Mammary epithelial cell (primary cell): ENCODE measurements at regions of chr7 and their contacts with region 1.

Region 1: DNA sequence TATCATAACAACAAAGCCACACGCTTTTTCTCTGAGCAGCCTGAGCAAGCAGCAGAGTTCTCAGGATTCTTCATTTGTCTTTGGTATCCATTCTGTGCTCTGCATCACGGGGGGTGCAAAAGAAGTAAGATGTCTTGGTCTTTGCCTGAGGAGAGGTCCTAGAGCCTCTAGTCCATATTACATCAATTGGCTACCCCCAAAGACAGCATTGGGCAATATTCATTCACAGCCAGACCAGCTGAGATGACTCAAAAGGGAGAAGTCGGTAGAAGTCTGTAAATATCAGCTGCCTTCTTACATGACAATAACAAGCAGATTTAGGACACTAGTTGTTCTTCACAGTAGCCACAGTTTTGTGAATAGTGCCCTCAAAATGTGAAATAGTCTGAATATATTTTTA is 66.6 kb downstream of the FZD1 start:
- DNase-seq: no peak
- H3K4me3 ChIP-seq: no peak overlapping the region
- H3K27ac ChIP-seq: no peak overlapping the region
- H3K4me1 ChIP-seq: no peaks in the 10 kb centered on the region
- H3K27me3 ChIP-seq: peaks cover 9% of the 10 kb centered on the region
- CTCF ChIP-seq: no peak

Region 2: DNA sequence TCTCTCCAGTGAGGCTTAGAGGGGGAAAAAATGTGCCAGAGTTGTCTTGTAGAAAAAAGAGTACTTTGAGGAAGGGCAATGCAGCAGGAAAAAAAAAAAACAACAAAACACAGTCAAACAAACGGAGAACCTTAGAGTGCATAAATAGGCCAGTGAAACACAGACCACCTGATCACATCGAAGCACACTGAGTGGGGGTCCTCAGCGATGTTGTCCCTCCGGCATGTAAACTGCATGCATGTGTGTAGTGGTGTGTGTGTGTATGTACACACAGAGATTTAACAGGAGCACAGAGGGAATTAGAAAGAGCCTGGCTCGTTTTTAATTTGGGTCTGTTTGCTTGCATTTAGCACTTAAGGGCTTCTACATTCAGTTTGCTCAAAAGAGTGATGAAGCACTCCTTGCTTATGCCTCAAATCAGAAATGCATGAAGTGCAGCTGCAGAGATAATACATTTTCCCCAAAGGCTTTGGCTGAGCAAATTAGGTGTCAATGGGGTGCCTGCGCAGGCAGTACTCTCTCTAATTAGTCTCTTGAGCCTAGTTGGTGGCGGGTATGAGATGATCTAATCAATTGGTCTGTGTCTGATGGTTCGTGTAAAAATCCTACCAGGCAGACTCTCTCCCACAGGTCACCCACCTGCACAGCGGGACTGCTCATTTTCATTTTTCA is 129.3 kb before region 1 on chr7:
- CTCF ChIA-PET with region 1: no interaction called
- dilution Hi-C with region 1: no loop called
- in situ Hi-C with region 1: no loop called
- intact Hi-C with region 1: no loop called
- DNase-seq: no peak
- H3K4me3 ChIP-seq: no peak overlapping the region
- H3K27ac ChIP-seq: no peak overlapping the region
- H3K4me1 ChIP-seq: no peaks in the 10 kb centered on the region
- H3K27me3 ChIP-seq: no peaks in the 10 kb centered on the region
- CTCF ChIP-seq: no peak

Region 3: DNA sequence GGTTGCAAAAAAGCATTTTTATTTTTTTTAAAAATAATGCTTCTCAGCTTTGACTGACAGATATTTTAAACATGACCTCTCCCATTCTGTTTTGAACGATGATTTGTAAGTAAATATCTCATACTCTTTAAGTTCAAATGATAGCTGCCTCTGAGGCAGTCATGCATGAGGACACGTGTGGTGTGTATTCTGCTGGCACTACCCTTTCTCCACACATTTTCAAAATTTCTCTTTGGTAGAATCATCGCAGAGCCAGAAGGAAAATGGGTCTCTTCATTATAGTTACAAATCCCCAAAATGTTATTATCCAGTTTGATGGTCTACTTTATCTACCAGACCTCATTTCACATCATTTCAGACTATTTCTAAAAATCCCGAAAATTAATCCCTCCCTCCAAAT is 11.5 kb before region 1 on chr7:
- CTCF ChIA-PET with region 1: interaction called, 15 read pairs
- dilution Hi-C with region 1: no loop called
- in situ Hi-C with region 1: no loop called
- intact Hi-C with region 1: no loop called
- DNase-seq: no peak
- H3K4me3 ChIP-seq: no peak overlapping the region
- H3K27ac ChIP-seq: no peak overlapping the region
- H3K4me1 ChIP-seq: peaks cover 2% of the 10 kb centered on the region
- H3K27me3 ChIP-seq: no peaks in the 10 kb centered on the region
- CTCF ChIP-seq: no peak